Activated T-helper 1 cell treated with anti-CD3 and anti-CD28 coated beads, Interleukin-12 subunit alpha, Interleukin-12 subunit beta, Interleukin-2, Interleukin-4 antibody, amounts not matched to agents 30 ng/mL and 10 ng/mL and 1 ng/mL, durations not matched to agents 14 hours and 24 hours and 36 hours (primary cell): ENCODE measurements at regions of chr1 and their contacts with region 1.

Region 1: GRCh38 chr1:156728597-156729462 is at the start of gene ISG20L2:
- DNase-seq: peak; percentile 96
- H3K4me3 Mint-ChIP-seq: no peak within 1 kb of the TSS
- H3K27ac Mint-ChIP-seq: no peak within 1 kb of the TSS
- H3K4me1 Mint-ChIP-seq: peaks cover 30% of the 10 kb centered on the region
- H3K27me3 Mint-ChIP-seq: no peaks in the 10 kb centered on the region
- total RNA-seq, gene ISG20L2: 73.7 and 81.5 TPM in 2 replicates

Region 2: GRCh38 chr1:156346636-156347035 is 382.2 kb before region 1 on chr1:
- intact Hi-C with region 1: no loop called
- DNase-seq: no peak
- H3K4me3 Mint-ChIP-seq: no peak overlapping the region
- H3K27ac Mint-ChIP-seq: no peak overlapping the region
- H3K4me1 Mint-ChIP-seq: no peaks in the 10 kb centered on the region
- H3K27me3 Mint-ChIP-seq: peaks cover 39% of the 10 kb centered on the region

Region 3: GRCh38 chr1:156456622-156457465 is 272.0 kb before region 1 on chr1:
- intact Hi-C with region 1: loop called (anchors 2 kb)
- DNase-seq: peak; percentile 92
- H3K4me3 Mint-ChIP-seq: peak overlapping the region; percentile 89
- H3K27ac Mint-ChIP-seq: peak overlapping the region; percentile 98
- H3K4me1 Mint-ChIP-seq: peaks cover 14% of the 10 kb centered on the region
- H3K27me3 Mint-ChIP-seq: peaks cover 5% of the 10 kb centered on the region

Region 4: DNA sequence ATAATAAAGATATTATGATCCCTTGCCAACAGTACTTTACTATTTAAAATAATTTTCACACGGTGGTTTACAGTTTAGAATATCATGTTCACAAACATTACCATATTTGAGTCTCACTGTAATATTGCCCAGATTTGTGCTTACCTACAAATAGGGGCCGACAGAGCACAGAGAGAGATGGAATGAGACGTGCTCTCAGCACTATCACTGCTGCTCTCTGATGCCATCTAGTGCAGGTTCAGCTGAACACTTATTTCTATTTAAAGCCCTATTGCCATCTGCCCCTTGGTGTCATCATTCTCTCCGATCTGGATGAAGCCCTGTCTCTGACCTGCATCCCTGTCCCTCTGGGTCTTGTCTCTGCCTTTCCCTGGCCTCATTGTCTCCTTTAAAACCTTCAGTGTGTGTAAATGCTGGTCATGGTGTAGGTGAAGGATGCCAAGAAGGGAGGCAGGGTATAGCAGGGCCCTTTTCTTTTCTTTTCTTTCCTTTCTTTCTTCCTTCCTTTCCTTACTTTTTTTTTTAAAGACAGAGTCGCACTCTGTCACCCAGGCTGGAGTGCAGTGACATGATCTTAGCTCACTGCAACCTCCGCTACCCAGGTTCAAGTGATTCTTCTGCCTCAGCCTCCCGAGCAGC is 120.7 kb before region 1 on chr1:
- intact Hi-C with region 1: no loop called
- DNase-seq: peak; percentile 49
- H3K4me3 Mint-ChIP-seq: no peak overlapping the region
- H3K27ac Mint-ChIP-seq: no peak overlapping the region
- H3K4me1 Mint-ChIP-seq: peaks cover 12% of the 10 kb centered on the region
- H3K27me3 Mint-ChIP-seq: peaks cover 14% of the 10 kb centered on the region

Region 5: DNA sequence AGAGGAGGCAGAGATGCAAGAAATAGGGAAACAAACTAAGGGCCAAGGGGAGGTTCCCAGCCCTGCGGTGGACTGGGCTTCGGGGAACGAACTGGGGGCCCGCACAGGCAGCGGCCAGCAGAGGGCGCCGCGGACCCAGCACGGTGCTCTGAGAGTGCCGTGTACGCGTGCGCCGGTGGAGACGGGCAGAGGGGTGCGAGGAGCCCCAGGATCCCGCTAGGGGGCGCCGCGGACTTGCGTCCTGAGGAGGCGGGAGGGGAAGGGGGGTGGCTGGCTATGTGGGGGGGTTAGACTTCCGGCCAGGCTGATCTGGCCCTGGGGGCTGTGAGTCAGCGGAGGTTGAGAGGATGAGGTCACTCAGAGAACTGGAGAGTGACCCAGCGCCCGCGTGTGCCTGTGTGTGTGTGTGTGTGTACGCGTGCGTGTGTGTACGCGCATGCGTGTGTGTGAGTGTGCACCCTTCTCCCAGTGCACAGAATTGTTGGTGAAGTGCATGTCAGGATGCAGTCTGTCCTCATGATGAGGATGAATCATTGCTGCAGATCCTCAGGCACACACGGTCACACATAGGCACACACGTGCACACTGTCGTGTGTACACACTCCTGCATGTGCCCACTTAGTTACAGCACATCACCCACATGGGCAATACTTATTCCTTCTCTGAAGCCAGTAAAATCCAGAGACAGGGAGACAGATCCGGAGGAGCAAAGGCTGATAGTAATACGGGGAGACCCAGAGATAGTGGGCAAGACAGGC is 68.7 kb before region 1 on chr1:
- intact Hi-C with region 1: loop called (anchors 1 kb)
- DNase-seq: peak; percentile 88
- H3K4me3 Mint-ChIP-seq: peak overlapping the region; percentile 86
- H3K27ac Mint-ChIP-seq: peak overlapping the region; percentile 89
- H3K4me1 Mint-ChIP-seq: peaks cover 51% of the 10 kb centered on the region
- H3K27me3 Mint-ChIP-seq: peaks cover 25% of the 10 kb centered on the region

Region 6: GRCh38 chr1:156740679-156741612 is 12.1 kb after region 1 on chr1 and contains the start of gene MRPL24:
- intact Hi-C with region 1: loop called (anchors 1 kb)
- DNase-seq: peak; percentile 97
- H3K4me3 Mint-ChIP-seq: peak within 1 kb of the TSS; percentile 93
- H3K27ac Mint-ChIP-seq: peak within 1 kb of the TSS; percentile 94
- H3K4me1 Mint-ChIP-seq: peaks cover 54% of the 10 kb centered on the region
- H3K27me3 Mint-ChIP-seq: no peaks in the 10 kb centered on the region
- total RNA-seq, gene MRPL24: 132 and 135 TPM in 2 replicates

Region 7: GRCh38 chr1:156813750-156814570 is 85.1 kb after region 1 on chr1:
- intact Hi-C with region 1: loop called (anchors 1 kb)
- DNase-seq: peak; percentile 68
- H3K4me3 Mint-ChIP-seq: peak overlapping the region; percentile 85
- H3K27ac Mint-ChIP-seq: peak overlapping the region; percentile 100
- H3K4me1 Mint-ChIP-seq: peaks cover 75% of the 10 kb centered on the region
- H3K27me3 Mint-ChIP-seq: no peaks in the 10 kb centered on the region

Region 8: DNA sequence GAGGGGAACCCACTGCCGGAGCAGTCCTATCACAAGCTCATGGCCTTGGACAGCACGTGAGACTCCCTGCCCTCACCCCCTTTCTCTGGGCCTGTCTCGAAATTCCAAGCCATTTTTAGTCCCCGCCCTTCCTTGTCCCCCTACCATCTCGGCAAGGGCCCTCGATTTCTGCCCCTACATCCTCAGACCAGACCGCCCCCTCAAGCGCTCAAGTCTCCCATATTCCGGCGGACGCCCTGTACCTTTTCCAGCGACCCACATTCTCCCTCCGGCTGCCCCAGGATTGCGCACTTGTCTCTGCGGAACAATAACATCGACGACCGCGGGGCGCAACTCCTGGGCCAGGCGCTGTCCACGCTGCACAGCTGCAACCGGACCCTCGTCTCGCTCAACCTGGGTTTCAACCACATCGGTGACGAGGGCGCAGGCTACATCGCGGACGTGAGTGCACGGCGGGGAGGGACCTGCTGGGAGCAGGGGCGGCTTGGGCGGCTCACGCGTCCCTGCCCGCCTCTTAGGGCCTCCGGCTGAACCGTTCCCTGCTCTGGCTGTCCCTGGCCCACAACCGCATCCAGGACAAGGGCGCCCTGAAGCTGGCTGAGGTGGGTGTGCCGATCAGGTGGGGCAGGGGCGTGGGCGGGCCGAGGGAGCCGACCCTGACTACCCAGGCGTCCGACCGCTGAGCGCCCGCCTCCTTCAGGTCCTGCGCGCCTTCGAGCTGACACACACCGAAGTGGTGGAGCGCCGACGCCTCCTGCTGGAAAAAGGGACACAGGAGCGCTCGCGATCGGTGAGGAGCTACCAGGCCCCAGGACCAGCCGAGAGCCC is 198.6 kb after region 1 on chr1:
- intact Hi-C with region 1: loop called (anchors 2 kb)
- DNase-seq: peak; percentile 62
- H3K4me3 Mint-ChIP-seq: peak overlapping the region; percentile 55
- H3K27ac Mint-ChIP-seq: no peak overlapping the region
- H3K4me1 Mint-ChIP-seq: peaks cover 23% of the 10 kb centered on the region
- H3K27me3 Mint-ChIP-seq: peaks cover 75% of the 10 kb centered on the region